Activated naive CD4-positive, alpha-beta T cell treated with anti-CD3 and anti-CD28 coated beads for 36 hours (primary cell): ENCODE measurements at regions of chr15 and their contacts with region 1.

Region 1: GRCh38 chr15:33086507-33087121 is 107.9 kb downstream of the FMN1 start:
- DNase-seq: no peak
- H3K4me3 Mint-ChIP-seq: no peak overlapping the region
- H3K27ac Mint-ChIP-seq: no peak overlapping the region
- H3K4me1 Mint-ChIP-seq: no peaks in the 10 kb centered on the region
- H3K27me3 Mint-ChIP-seq: no peaks in the 10 kb centered on the region

Region 2: GRCh38 chr15:33104212-33104611 is 17.6 kb after region 1 on chr15:
- CTCF ChIA-PET with region 1: interaction called, 4 read pairs
- intact Hi-C with region 1: loop called (anchors 1 kb)
- DNase-seq: peak; percentile 32
- H3K4me3 Mint-ChIP-seq: no peak overlapping the region
- H3K27ac Mint-ChIP-seq: no peak overlapping the region
- H3K4me1 Mint-ChIP-seq: peaks cover 6% of the 10 kb centered on the region
- H3K27me3 Mint-ChIP-seq: peaks cover 2% of the 10 kb centered on the region

Region 3: DNA sequence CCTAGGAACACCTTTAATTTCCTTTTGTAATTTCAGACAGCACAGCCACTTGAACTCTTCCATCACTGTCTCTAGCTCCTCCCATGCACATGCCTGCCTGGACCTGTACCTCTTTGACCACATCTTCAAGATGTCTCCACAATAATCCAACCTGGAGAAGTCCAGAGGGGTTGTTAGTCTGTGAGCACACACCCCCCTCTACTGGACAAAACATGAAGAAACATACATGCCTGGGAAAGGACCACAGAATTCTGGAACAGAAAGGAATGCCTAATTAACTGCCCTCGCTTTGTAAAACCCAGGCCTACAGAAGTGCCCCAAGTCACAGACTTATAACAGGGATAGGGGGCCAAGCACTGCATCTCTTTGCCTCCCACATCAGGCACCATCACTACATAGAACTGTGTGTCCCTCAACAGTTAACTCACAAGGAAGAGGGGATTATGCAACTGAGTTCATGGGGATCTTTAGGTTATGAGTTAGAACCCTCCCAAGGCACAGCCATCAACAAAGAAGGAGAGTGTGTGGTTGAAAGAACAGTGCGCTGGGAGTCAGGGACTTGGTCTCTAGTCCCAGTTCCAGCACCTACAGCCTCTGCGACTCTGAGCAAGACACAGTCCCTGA is 46.2 kb after region 1 on chr15:
- CTCF ChIA-PET with region 1: interaction called, 34 read pairs
- intact Hi-C with region 1: loop called (anchors 1 kb)
- DNase-seq: no peak
- H3K4me3 Mint-ChIP-seq: no peak overlapping the region
- H3K27ac Mint-ChIP-seq: no peak overlapping the region
- H3K4me1 Mint-ChIP-seq: peaks cover 2% of the 10 kb centered on the region
- H3K27me3 Mint-ChIP-seq: peaks cover 3% of the 10 kb centered on the region

Region 4: GRCh38 chr15:33292717-33293307 is 206.2 kb after region 1 on chr15:
- CTCF ChIA-PET with region 1: interaction called, 5 read pairs
- intact Hi-C with region 1: loop called (anchors 5 kb)
- DNase-seq: peak; percentile 75
- H3K4me3 Mint-ChIP-seq: no peak overlapping the region
- H3K27ac Mint-ChIP-seq: no peak overlapping the region
- H3K4me1 Mint-ChIP-seq: no peaks in the 10 kb centered on the region
- H3K27me3 Mint-ChIP-seq: no peaks in the 10 kb centered on the region

Region 5: DNA sequence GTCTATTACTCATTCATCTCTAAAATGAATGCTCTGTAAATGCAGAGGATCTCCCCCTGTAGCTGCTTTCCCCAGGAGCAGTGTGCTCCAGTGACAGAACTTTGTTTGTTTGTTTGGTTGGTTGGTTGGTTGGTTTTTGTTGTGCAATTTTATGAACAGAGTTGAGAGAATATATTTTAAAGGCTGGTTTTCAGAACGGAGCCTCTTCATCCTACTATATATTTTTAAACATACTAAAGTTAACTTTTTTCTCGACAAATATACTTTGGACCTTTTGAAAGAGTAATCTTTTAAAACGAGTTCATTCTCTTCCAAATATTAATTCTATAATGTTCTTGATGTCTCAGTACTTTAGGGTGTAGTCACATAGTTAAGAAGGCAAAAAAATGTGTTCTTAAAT is 244.3 kb after region 1 on chr15:
- CTCF ChIA-PET with region 1: no interaction called
- intact Hi-C with region 1: no loop called
- DNase-seq: no peak
- H3K4me3 Mint-ChIP-seq: no peak overlapping the region
- H3K27ac Mint-ChIP-seq: no peak overlapping the region
- H3K4me1 Mint-ChIP-seq: no peaks in the 10 kb centered on the region
- H3K27me3 Mint-ChIP-seq: peaks cover 48% of the 10 kb centered on the region

Region 6: GRCh38 chr15:33402600-33402999 is 316.0 kb after region 1 on chr15:
- CTCF ChIA-PET with region 1: no interaction called
- intact Hi-C with region 1: no loop called
- DNase-seq: no peak
- H3K4me3 Mint-ChIP-seq: no peak overlapping the region
- H3K27ac Mint-ChIP-seq: no peak overlapping the region
- H3K4me1 Mint-ChIP-seq: no peaks in the 10 kb centered on the region
- H3K27me3 Mint-ChIP-seq: no peaks in the 10 kb centered on the region

Region 7: GRCh38 chr15:33737687-33738601 is 651.3 kb after region 1 on chr15:
- CTCF ChIA-PET with region 1: interaction called, 6 read pairs
- intact Hi-C with region 1: loop called (anchors 10 kb)
- DNase-seq: peak; percentile 56
- H3K4me3 Mint-ChIP-seq: no peak overlapping the region
- H3K27ac Mint-ChIP-seq: no peak overlapping the region
- H3K4me1 Mint-ChIP-seq: no peaks in the 10 kb centered on the region
- H3K27me3 Mint-ChIP-seq: peaks cover 5% of the 10 kb centered on the region